A673 (cell line): ENCODE measurements at regions of chr10 and their contacts with region 1.

Region 1: GRCh38 chr10:99560277-99561126 is 27.8 kb downstream of the NKX2-3 start:
- DNase-seq: peak; percentile 68
- H3K4me3 ChIP-seq: no peak overlapping the region
- H3K27ac ChIP-seq: no peak overlapping the region
- H3K4me1 ChIP-seq: no peaks in the 10 kb centered on the region
- H3K27me3 ChIP-seq: no peaks in the 10 kb centered on the region
- CTCF ChIP-seq: peak; percentile 85

Region 2: DNA sequence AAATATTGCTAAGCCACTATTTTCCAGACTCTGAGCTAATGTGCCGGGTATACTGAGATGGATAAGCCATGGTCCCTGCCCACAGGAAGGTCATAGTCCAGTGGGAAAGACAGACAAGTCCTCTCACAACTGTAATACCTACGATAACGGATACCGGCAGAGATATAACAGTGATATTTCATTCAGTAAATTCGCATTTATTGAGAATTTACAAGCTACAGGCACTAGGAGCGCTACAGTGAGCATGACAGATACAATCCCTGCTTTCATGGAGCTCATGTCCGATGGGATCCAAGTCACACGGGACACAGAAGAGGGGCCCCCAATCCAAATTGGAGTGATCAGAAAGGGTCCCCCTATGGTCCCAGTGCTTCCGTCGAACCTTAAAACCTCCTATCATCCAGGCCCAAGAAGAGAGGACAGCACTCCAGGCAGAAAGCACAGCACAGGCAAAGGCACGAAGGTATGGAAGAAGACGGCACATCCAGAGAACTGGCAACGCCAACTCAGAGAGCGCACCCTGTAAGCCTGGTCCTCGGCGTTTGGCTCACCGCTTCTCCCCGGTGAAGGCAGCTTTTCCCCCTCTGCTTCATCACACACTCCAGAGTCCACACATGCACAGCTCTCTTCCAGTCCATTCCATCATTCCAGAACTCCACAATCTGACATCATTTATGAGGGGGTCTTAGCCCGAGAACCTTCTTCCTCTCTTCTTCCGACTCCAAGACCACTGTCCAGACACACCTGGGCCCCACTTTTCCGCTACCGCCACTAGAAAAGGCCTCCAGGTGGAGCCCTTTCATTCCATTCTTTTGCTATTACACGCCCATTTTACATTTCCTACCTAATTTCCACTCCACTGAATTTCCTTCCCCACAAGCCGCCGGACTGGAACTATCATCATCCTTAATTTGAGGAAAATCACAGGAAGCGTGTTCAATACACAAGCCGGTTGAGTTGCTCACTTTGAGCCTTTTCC is 75.6 kb before region 1 on chr10:
- CTCF ChIA-PET with region 1: no interaction called
- POLR2A ChIA-PET with region 1: interaction called, 19 read pairs
- intact Hi-C with region 1: no loop called
- DNase-seq: no peak
- H3K4me3 ChIP-seq: no peak overlapping the region
- H3K27ac ChIP-seq: no peak overlapping the region
- H3K4me1 ChIP-seq: no peaks in the 10 kb centered on the region
- H3K27me3 ChIP-seq: peaks cover 52% of the 10 kb centered on the region
- CTCF ChIP-seq: no peak

Region 3: GRCh38 chr10:99582255-99582770 is 21.8 kb after region 1 on chr10:
- CTCF ChIA-PET with region 1: interaction called, 12 read pairs
- POLR2A ChIA-PET with region 1: no interaction called
- intact Hi-C with region 1: no loop called
- DNase-seq: no peak
- H3K4me3 ChIP-seq: no peak overlapping the region
- H3K27ac ChIP-seq: no peak overlapping the region
- H3K4me1 ChIP-seq: no peaks in the 10 kb centered on the region
- H3K27me3 ChIP-seq: no peaks in the 10 kb centered on the region
- CTCF ChIP-seq: no peak

Region 4: GRCh38 chr10:99612167-99612831 is 51.8 kb after region 1 on chr10:
- CTCF ChIA-PET with region 1: interaction called, 6 read pairs
- POLR2A ChIA-PET with region 1: no interaction called
- intact Hi-C with region 1: loop called (anchors 1 kb)
- DNase-seq: peak; percentile 84
- H3K4me3 ChIP-seq: no peak overlapping the region
- H3K27ac ChIP-seq: no peak overlapping the region
- H3K4me1 ChIP-seq: peaks cover 4% of the 10 kb centered on the region
- H3K27me3 ChIP-seq: no peaks in the 10 kb centered on the region
- CTCF ChIP-seq: peak; percentile 84

Region 5: GRCh38 chr10:99711129-99711719 is 150.7 kb after region 1 on chr10:
- CTCF ChIA-PET with region 1: no interaction called
- POLR2A ChIA-PET with region 1: no interaction called
- intact Hi-C with region 1: loop called (anchors 2 kb)
- DNase-seq: peak; percentile 60
- H3K4me3 ChIP-seq: no peak overlapping the region
- H3K27ac ChIP-seq: no peak overlapping the region
- H3K4me1 ChIP-seq: no peaks in the 10 kb centered on the region
- H3K27me3 ChIP-seq: no peaks in the 10 kb centered on the region
- CTCF ChIP-seq: peak; percentile 66